ENCODE measurements at regions of chrX and their contacts with region 1.

Region 1: DNA sequence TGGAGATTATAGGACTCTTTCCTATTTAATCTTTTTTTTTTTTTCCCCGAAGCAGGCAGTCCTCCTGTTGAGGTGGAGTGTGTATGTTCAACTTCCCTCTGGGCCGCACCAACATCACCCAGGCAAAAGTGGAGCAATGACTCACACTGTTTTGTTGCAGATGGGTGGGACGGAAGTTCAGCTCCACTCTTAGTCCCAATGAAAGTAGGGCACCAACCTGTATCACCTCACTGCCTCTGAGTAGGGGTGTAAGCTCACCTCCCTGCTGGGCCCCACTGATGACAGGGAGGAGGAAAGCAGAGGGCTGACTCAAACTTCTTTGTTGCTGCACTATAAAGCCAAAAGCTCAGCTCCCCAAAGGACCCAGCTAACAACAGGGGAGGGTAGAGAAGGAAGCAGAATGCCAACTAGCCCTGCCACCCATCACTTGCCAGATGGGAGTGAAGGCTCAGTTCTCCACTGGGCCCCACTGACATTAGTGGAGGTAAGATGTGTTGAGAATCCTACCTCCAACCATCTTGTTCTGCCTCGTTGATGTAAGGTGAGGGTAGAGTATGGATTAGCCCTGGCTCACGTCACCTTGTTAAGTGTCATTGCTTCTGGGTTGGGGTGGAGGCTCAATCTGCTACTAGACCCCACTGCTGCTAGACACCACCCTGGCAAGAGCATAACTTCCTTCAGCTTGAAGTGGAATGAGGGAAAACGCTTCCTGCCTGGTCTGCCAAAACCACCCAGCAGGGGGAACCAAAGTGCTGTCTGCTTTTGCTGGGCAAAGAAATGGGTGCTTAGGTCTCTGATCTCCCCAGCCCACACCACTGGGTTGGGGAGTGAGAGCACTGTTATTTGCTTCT is 14.1 kb downstream of the RPS6KA3 start:
- DNase-seq: peak; percentile 45
- ATAC-seq: peak; percentile 75
- H3K4me3 ChIP-seq: no peak overlapping the region
- H3K27ac ChIP-seq: no peak overlapping the region
- H3K4me1 ChIP-seq: no peaks in the 10 kb centered on the region
- H3K27me3 ChIP-seq: no peaks in the 10 kb centered on the region
- CTCF ChIP-seq: peak; percentile 72
- POLR2A ChIP-seq: no peak
- RAD21 ChIP-seq: peak; percentile 74

Region 2: DNA sequence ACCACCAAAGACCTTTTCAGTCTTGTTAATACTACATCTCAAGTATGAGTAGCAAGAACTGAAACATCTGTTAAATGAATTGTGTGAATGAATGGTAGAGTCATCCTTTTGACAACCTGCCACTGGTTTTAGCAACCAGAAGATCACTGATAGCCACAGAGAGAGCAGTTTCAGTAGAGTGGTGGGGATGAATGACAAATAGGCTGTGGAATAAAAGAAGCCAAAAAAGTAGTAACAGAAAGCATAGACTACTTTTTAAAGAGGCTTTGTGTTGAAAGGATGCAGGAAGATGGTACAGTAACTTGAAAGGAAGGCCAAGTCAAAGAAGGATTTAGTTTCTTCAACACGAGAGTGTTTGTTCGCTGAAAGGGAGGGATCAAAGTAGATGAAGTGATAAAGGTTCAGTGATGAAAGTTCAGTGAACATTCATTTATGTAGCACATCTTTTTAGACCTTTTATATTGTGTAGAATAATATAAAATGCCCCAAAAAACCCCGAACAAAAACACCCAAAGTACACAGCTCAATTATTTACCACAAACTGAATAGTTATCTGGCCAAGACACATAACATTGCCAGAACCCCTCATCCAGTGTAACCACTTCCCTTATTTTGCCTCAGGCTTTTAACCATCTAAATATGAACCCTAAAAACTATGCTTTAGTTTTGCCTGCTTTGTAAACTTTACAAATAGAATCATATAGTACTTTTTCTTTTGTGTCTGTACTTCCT is 70.8 kb before region 1 on chrX:
- CTCF ChIA-PET with region 1: no interaction called
- POLR2A ChIA-PET with region 1: no interaction called
- dilution Hi-C with region 1: no loop called
- in situ Hi-C with region 1: no loop called
- intact Hi-C with region 1: no loop called
- DNase-seq: no peak
- ATAC-seq: no peak
- H3K4me3 ChIP-seq: no peak overlapping the region
- H3K27ac ChIP-seq: no peak overlapping the region
- H3K4me1 ChIP-seq: no peaks in the 10 kb centered on the region
- H3K27me3 ChIP-seq: no peaks in the 10 kb centered on the region
- CTCF ChIP-seq: no peak
- POLR2A ChIP-seq: no peak
- RAD21 ChIP-seq: no peak

Region 3: DNA sequence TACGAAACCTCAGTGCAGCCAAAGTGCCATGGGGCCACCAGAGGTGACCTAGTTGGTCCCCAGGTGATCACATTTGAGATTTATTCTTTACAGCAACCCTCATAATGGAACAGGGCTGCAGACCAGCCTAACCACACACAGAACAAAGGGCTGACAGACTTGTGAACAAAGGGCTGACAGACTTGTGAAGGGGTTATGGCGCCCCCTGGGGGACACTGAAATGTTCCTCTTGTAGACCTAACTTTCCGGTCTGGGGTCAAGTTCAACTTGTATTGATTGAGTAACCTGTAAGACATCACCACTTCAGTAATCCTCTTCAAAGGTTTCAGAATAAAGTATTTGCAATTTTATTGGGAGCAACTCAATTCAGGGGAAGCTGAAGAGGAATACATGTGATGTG is 190.0 kb after region 1 on chrX:
- CTCF ChIA-PET with region 1: interaction called, 4 read pairs
- POLR2A ChIA-PET with region 1: no interaction called
- dilution Hi-C with region 1: no loop called
- in situ Hi-C with region 1: loop called (anchors 5 kb)
- intact Hi-C with region 1: loop called (anchors 1 kb)
- DNase-seq: peak; percentile 76
- ATAC-seq: peak; percentile 29; the same call in 1 of the 2 replicates
- H3K4me3 ChIP-seq: no peak overlapping the region
- H3K27ac ChIP-seq: no peak overlapping the region
- H3K4me1 ChIP-seq: no peaks in the 10 kb centered on the region
- H3K27me3 ChIP-seq: no peaks in the 10 kb centered on the region; the same call in 1 of the 2 replicates
- CTCF ChIP-seq: peak; percentile 60
- POLR2A ChIP-seq: no peak
- RAD21 ChIP-seq: peak; percentile 77

Region 4: GRCh38 chrX:20664774-20665173 is 412.2 kb after region 1 on chrX:
- CTCF ChIA-PET with region 1: no interaction called
- POLR2A ChIA-PET with region 1: no interaction called
- dilution Hi-C with region 1: no loop called
- in situ Hi-C with region 1: no loop called
- intact Hi-C with region 1: no loop called
- DNase-seq: no peak
- ATAC-seq: no peak
- H3K4me3 ChIP-seq: no peak overlapping the region
- H3K27ac ChIP-seq: no peak overlapping the region
- H3K4me1 ChIP-seq: no peaks in the 10 kb centered on the region
- H3K27me3 ChIP-seq: no peaks in the 10 kb centered on the region
- CTCF ChIP-seq: no peak
- POLR2A ChIP-seq: no peak
- RAD21 ChIP-seq: no peak

Measured in IMR-90 (cell line).